Naive thymus-derived CD4-positive, alpha-beta T cell (primary cell): ENCODE measurements at regions of chr3 and their contacts with region 1.

Region 1: GRCh38 chr3:112979240-112979832 is 4.4 kb upstream of the CD200R1 start:
- DNase-seq: peak in 7 of 9 donors; percentile 32 to 67 (median 62)
- ATAC-seq: peak; percentile 52
- H3K4me3 ChIP-seq: no peak overlapping the region
- H3K4me3 Mint-ChIP-seq: peak overlapping the region in 6 of 10 donors; percentile 0 to 59 (median 28)
- H3K27ac ChIP-seq: no peak overlapping the region
- H3K27ac Mint-ChIP-seq: peak overlapping the region in 7 of 9 donors; percentile 4 to 65 (median 38)
- H3K4me1 ChIP-seq: peaks cover 35 to 57% of the 10 kb centered on the region in 2 donors
- H3K4me1 Mint-ChIP-seq: peaks cover 45 to 73% (median 64%) of the 10 kb centered on the region in 7 donors
- H3K27me3 ChIP-seq: no peaks in the 10 kb centered on the region
- H3K27me3 Mint-ChIP-seq: peaks cover 0 to 3% (median 0%) of the 10 kb centered on the region in 5 donors

Region 2: GRCh38 chr3:112136959-112137693 is 842.2 kb before region 1 on chr3:
- CTCF ChIA-PET with region 1: no interaction called
- POLR2A ChIA-PET with region 1: no interaction called
- intact Hi-C with region 1: loop called in 1 of 2 experiments (anchors 10 kb)
- DNase-seq: peak in 5 of 9 donors; percentile 42 to 55 (median 53)
- ATAC-seq: no peak
- H3K4me3 ChIP-seq: no peak overlapping the region
- H3K4me3 Mint-ChIP-seq: peak overlapping the region in 2 of 10 donors; percentile 3 to 21
- H3K27ac ChIP-seq: no peak overlapping the region
- H3K27ac Mint-ChIP-seq: peak overlapping the region in 8 of 9 donors; percentile 0 to 99 (median 96)
- H3K4me1 ChIP-seq: peaks cover 19 to 45% of the 10 kb centered on the region in 2 donors
- H3K4me1 Mint-ChIP-seq: peaks cover 31 to 76% (median 60%) of the 10 kb centered on the region in 7 donors
- H3K27me3 ChIP-seq: no peaks in the 10 kb centered on the region
- H3K27me3 Mint-ChIP-seq: no peaks in the 10 kb centered on the region

Region 3: DNA sequence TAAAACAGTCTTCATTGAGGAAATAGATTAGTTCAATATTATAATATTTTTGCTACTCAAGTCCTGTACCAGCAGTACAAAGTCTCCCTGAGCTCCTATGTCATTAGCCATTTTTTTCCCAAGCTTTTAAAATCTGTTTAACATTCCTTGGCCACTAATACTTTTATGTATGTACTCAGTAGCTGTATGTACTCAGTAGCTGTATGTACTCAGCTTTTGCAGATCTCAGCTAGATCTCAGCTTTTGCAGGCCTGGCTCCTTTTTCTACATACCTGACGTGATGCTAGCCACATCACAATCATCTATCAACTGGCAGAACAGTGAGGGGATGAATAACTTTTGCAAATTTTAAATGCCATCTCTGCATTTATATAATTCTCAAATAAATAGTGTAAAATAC is 699.1 kb before region 1 on chr3:
- CTCF ChIA-PET with region 1: no interaction called
- POLR2A ChIA-PET with region 1: no interaction called
- intact Hi-C with region 1: no loop called
- DNase-seq: no peak
- ATAC-seq: no peak
- H3K4me3 ChIP-seq: no peak overlapping the region
- H3K4me3 Mint-ChIP-seq: no peak overlapping the region
- H3K27ac ChIP-seq: no peak overlapping the region
- H3K27ac Mint-ChIP-seq: no peak overlapping the region
- H3K4me1 ChIP-seq: no peaks in the 10 kb centered on the region
- H3K4me1 Mint-ChIP-seq: no peaks in the 10 kb centered on the region
- H3K27me3 ChIP-seq: no peaks in the 10 kb centered on the region
- H3K27me3 Mint-ChIP-seq: peaks cover 0 to 46% (median 14%) of the 10 kb centered on the region in 5 donors

Region 4: DNA sequence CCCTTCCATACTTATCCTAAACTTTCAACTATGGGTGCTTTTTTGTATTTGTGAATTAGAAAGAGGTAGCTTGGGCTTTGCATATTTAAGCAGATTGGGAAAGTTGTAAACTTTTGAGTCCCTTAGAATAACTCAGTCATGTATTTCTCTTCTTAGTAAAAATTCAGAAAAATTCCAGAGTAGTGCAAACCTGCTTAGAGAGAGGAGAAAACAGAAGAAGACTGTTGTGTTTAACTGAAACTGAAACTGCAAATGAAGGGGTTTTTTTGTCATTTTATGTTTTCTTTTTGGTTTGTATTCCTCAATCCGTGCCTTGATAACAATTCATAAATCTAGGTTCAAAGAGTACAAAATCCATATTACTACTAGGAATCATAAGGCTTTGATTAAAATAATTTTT is 615.0 kb before region 1 on chr3:
- CTCF ChIA-PET with region 1: no interaction called
- POLR2A ChIA-PET with region 1: no interaction called
- intact Hi-C with region 1: no loop called
- DNase-seq: no peak
- ATAC-seq: no peak
- H3K4me3 ChIP-seq: no peak overlapping the region
- H3K4me3 Mint-ChIP-seq: peak overlapping the region in 8 of 10 donors; percentile 30 to 66 (median 54)
- H3K27ac ChIP-seq: peak overlapping the region; percentile 24
- H3K27ac Mint-ChIP-seq: peak overlapping the region; percentile 26 to 85 (median 78)
- H3K4me1 ChIP-seq: peaks cover 0 to 4% of the 10 kb centered on the region in 2 donors
- H3K4me1 Mint-ChIP-seq: peaks cover under 1 to 32% (median 26%) of the 10 kb centered on the region in 7 donors
- H3K27me3 ChIP-seq: no peaks in the 10 kb centered on the region
- H3K27me3 Mint-ChIP-seq: no peaks in the 10 kb centered on the region

Region 5: GRCh38 chr3:112642912-112643506 is 336.3 kb before region 1 on chr3:
- CTCF ChIA-PET with region 1: interaction called, 13 read pairs
- POLR2A ChIA-PET with region 1: no interaction called
- intact Hi-C with region 1: loop called (anchors 1 kb)
- DNase-seq: peak; percentile 51 to 80 (median 72)
- ATAC-seq: peak; percentile 97
- H3K4me3 ChIP-seq: peak overlapping the region; percentile 39
- H3K4me3 Mint-ChIP-seq: peak overlapping the region; percentile 6 to 81 (median 66)
- H3K27ac ChIP-seq: no peak overlapping the region
- H3K27ac Mint-ChIP-seq: peak overlapping the region in 2 of 9 donors; percentile 41 to 57
- H3K4me1 ChIP-seq: peaks cover 0 to 14% of the 10 kb centered on the region in 2 donors
- H3K4me1 Mint-ChIP-seq: peaks cover 7 to 24% (median 9%) of the 10 kb centered on the region in 7 donors
- H3K27me3 ChIP-seq: no peaks in the 10 kb centered on the region
- H3K27me3 Mint-ChIP-seq: peaks cover 0 to 16% (median 11%) of the 10 kb centered on the region in 5 donors

Region 6: GRCh38 chr3:112814266-112814665 is 165.1 kb before region 1 on chr3:
- CTCF ChIA-PET with region 1: no interaction called
- POLR2A ChIA-PET with region 1: no interaction called
- intact Hi-C with region 1: loop called (anchors 2 to 5 kb)
- DNase-seq: no peak
- ATAC-seq: no peak
- H3K4me3 ChIP-seq: no peak overlapping the region
- H3K4me3 Mint-ChIP-seq: no peak overlapping the region
- H3K27ac ChIP-seq: no peak overlapping the region
- H3K27ac Mint-ChIP-seq: no peak overlapping the region
- H3K4me1 ChIP-seq: no peaks in the 10 kb centered on the region
- H3K4me1 Mint-ChIP-seq: peaks cover 18 to 28% (median 23%) of the 10 kb centered on the region in 7 donors
- H3K27me3 ChIP-seq: no peaks in the 10 kb centered on the region
- H3K27me3 Mint-ChIP-seq: peaks cover 0 to 3% (median 0%) of the 10 kb centered on the region in 5 donors

Region 7: GRCh38 chr3:112990672-112991602 is 11.6 kb after region 1 on chr3 and contains the start of gene GTPBP8:
- CTCF ChIA-PET with region 1: interaction called, 14 read pairs
- POLR2A ChIA-PET with region 1: interaction called, 14 read pairs
- intact Hi-C with region 1: loop called in 1 of 2 experiments (anchors 1 kb)
- DNase-seq: peak; percentile 62 to 82 (median 78)
- ATAC-seq: peak; percentile 91
- H3K4me3 ChIP-seq: peak within 1 kb of the TSS; percentile 86
- H3K4me3 Mint-ChIP-seq: peak within 1 kb of the TSS; percentile 90 to 99 (median 95)
- H3K27ac ChIP-seq: peak within 1 kb of the TSS; percentile 86
- H3K27ac Mint-ChIP-seq: peak within 1 kb of the TSS; percentile 91 to 98 (median 95)
- H3K4me1 ChIP-seq: peaks cover 19 to 27% of the 10 kb centered on the region in 2 donors
- H3K4me1 Mint-ChIP-seq: peaks cover 30 to 85% (median 77%) of the 10 kb centered on the region in 7 donors
- H3K27me3 ChIP-seq: no peaks in the 10 kb centered on the region
- H3K27me3 Mint-ChIP-seq: no peaks in the 10 kb centered on the region
- total RNA-seq, gene GTPBP8: 12.6 to 49.1 (median 26.4) TPM

Region 8: GRCh38 chr3:113287803-113288648 is 308.7 kb after region 1 on chr3:
- CTCF ChIA-PET with region 1: no interaction called
- POLR2A ChIA-PET with region 1: no interaction called
- intact Hi-C with region 1: loop called in 1 of 2 experiments (anchors 1 kb)
- DNase-seq: peak in 6 of 9 donors; percentile 9 to 57 (median 40)
- ATAC-seq: peak; percentile 60
- H3K4me3 ChIP-seq: no peak overlapping the region
- H3K4me3 Mint-ChIP-seq: no peak overlapping the region
- H3K27ac ChIP-seq: no peak overlapping the region
- H3K27ac Mint-ChIP-seq: no peak overlapping the region
- H3K4me1 ChIP-seq: no peaks in the 10 kb centered on the region
- H3K4me1 Mint-ChIP-seq: peaks cover 0 to 4% (median 0%) of the 10 kb centered on the region in 7 donors
- H3K27me3 ChIP-seq: no peaks in the 10 kb centered on the region
- H3K27me3 Mint-ChIP-seq: no peaks in the 10 kb centered on the region